Dendritic cell treated with granulocyte-macrophage colony-stimulating factor and Interleukin-4, amounts not matched to agents 40 ng/mL and 50 ng/mL, for 4 days (primary cell): ENCODE measurements at regions of chr17 and their contacts with region 1.

Region 1: DNA sequence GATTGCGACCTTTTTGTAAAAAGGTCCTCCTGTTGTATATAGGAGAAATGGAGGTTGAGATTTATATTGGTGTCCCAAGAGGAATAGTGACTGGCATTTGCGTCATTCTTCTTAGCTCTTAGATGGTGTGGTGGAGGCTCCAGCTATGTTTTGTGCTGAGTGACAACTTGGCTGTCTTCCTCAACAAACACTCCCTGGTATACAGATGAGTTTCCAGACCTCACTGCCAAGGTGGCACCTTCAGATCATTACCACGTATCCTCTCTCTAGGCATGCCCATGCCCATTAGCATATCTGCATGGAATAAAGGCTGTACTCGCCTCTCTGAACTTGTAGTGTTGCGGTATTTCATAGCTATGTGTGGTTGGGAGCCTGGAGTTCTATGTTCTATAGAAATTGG is 120.0 kb downstream of the MAP2K4 start:
- H3K4me3 Mint-ChIP-seq: no peak overlapping the region
- H3K27ac Mint-ChIP-seq: no peak overlapping the region
- H3K4me1 Mint-ChIP-seq: no peaks in the 10 kb centered on the region
- H3K27me3 Mint-ChIP-seq: no peaks in the 10 kb centered on the region

Region 2: DNA sequence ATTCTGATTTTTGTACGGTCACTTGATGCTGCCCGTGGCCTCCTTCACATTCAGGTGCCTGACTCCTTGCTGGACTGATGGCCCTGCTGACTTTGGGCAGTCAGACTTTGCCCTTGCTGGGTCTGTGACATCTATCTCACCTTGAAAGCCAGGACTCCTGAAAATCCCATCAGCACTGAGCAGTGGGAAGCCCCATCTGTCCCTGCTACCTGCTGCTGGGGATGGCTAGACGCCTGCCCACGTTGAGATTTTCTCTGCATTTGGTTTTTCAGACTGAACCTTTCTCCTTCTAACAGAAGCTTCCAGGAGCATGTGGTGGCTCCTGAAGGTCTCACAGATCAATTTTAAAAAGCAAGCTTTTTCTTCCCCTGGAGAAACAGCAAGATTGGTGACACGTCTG is 133.2 kb before region 1 on chr17:
- intact Hi-C with region 1: no loop called
- H3K4me3 Mint-ChIP-seq: no peak overlapping the region
- H3K27ac Mint-ChIP-seq: no peak overlapping the region
- H3K4me1 Mint-ChIP-seq: no peaks in the 10 kb centered on the region
- H3K27me3 Mint-ChIP-seq: peaks cover 9% of the 10 kb centered on the region

Region 3: DNA sequence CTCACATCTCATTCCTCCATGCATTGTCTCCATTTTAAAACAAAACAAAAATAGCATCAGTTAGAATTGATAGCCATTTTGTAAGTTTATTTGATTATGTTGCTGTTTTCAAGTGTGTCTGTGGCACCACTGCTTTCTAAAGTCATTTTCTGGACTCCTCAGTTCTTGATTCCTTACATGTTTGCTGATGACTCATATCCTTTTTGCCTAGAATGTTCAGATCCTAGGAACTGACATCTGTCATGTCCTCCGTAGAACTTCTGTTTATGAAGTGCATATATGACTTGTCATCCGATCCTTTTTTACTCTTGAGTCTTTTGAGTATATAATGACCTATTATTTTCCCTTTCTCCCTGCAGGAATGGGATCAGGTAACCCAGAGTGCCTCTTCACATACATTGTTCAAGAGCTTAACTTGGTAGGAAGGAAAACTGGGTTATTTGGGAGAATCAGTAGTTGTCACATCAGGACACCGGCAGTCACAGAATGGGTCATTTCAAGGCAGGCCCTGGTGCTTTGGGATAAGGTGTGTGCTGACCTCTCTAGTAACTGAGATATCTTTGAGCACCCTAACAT is 50.8 kb before region 1 on chr17:
- intact Hi-C with region 1: loop called (anchors 5 kb)
- H3K4me3 Mint-ChIP-seq: no peak overlapping the region
- H3K27ac Mint-ChIP-seq: peak overlapping the region; percentile 55
- H3K4me1 Mint-ChIP-seq: peaks cover 11% of the 10 kb centered on the region
- H3K27me3 Mint-ChIP-seq: no peaks in the 10 kb centered on the region